ENCODE measurements at regions of chr12 and their contacts with region 1.

Region 1: DNA sequence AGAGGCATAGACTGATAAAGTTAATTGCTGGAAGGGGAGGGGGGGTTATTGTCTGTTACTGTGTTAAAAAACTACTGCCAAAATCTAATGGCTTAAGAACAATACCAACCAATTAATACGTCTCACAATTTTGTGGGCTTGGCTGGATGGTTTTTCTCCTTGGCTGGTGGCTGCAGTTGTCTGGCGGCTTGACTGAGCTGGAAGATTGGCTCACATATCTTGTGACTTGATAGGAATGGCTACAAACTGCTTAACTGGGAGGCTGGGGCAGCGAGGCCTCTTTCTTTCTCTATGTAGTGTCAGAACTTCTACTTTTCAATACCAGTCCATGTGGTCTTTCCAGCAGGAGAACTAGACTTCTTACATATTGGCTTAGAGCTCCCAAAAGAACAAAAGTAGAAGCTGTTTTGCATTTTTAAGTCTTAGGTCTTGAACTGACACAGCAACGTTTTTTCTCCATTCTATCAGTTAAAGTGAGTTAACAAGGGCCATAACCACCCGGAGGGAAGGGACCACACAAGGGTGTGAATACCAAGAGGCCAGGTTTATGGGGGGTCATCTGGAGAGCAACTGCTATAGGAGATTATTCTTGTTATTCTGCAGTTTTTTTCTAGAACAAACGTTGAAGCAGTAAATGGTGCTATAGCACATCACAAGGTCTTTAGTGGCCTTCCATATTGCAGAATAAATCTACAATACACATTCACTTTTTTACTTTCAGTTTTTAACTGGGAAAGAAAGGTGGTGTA is 46.9 kb downstream of the ZDHHC17 start:
- DNase-seq: no peak
- H3K4me3 Mint-ChIP-seq: no peak overlapping the region
- H3K27ac Mint-ChIP-seq: no peak overlapping the region
- H3K4me1 Mint-ChIP-seq: no peaks in the 10 kb centered on the region
- H3K27me3 Mint-ChIP-seq: no peaks in the 10 kb centered on the region
- CTCF ChIP-seq: no peak

Region 2: DNA sequence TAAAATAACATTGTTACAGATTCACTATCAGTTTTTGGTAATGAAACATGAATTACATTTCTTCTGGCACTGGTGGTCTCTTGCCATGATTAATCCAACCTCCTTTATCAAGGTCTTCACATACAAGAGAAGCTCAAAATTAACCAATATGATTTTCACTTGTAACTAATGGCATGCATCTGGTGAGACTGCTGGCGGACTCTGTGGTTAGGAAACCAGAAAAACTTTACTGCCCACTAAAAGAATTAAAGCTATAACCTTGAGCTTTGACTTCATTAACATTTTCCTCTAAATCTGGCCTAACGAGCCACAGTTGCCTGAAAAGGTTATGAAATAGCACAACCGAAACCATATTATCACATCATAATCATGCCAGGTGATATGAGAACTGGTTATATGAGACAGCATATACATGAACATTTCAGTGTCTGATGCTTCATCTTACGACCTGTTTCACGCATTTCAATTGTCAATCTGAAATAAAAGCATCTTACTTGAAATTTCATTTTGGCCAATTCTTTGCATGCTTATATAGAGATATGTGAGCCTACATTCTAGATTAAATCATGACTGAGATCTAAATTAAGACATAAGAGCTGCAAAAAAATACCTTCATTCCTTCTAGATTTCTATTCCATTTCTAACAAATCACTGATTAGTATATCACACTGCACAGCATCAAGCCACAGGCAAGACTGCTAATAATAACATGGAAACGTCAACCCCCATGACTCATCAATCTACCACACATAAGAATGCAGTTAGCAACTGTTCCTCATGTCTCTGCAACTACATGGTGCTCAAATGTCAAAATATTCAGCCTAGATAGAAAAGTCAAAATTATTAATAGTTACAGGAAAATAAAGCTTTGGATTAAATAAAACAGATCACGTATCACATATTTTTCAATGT is 340.6 kb before region 1 on chr12:
- CTCF ChIA-PET with region 1: no interaction called
- POLR2A ChIA-PET with region 1: no interaction called
- intact Hi-C with region 1: no loop called
- DNase-seq: peak; percentile 78
- H3K4me3 Mint-ChIP-seq: no peak overlapping the region
- H3K27ac Mint-ChIP-seq: no peak overlapping the region
- H3K4me1 Mint-ChIP-seq: peaks cover 11% of the 10 kb centered on the region
- H3K27me3 Mint-ChIP-seq: no peaks in the 10 kb centered on the region
- CTCF ChIP-seq: no peak

Region 3: GRCh38 chr12:76820888-76821482 is 10.1 kb after region 1 on chr12:
- CTCF ChIA-PET with region 1: interaction called, 15 read pairs
- POLR2A ChIA-PET with region 1: interaction called, 3 read pairs
- intact Hi-C with region 1: no loop called
- DNase-seq: peak; percentile 60
- H3K4me3 Mint-ChIP-seq: no peak overlapping the region
- H3K27ac Mint-ChIP-seq: no peak overlapping the region
- H3K4me1 Mint-ChIP-seq: no peaks in the 10 kb centered on the region
- H3K27me3 Mint-ChIP-seq: no peaks in the 10 kb centered on the region
- CTCF ChIP-seq: peak; percentile 50

Measured in MCF 10A (cell line).